Astrocyte of the spinal cord (primary cell): ENCODE measurements at regions of chr17 and their contacts with region 1.

Region 1: DNA sequence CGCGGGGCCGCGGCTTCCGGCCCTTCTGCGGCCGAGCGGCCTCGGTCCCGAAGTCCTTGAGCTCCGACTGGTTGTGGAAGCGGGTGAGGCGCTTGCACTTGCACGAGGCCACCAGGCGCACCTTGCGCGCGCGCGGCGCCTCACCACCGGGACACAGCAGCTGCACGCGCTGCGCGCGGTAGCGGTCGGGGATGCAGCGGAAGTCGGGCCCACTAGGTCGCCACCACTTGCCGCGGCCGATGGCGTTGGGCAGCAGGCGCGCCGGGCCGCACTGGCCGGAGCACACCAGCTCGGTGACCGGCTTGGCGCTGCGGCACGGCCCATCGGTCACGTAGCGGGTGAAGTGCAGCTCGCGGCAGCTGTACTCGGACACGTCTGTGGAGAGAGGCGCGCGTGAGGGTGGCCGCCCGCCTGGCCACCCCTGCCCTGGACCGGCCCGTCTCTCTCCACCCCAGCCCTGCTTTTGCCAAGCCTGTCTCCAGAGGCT is 3.2 kb downstream of the SOST start:
- DNase-seq: no peak
- H3K4me3 ChIP-seq: no peak overlapping the region
- CTCF ChIP-seq: no peak

Region 2: GRCh38 chr17:43694077-43694870 is 61.2 kb before region 1 on chr17:
- in situ Hi-C with region 1: loop called (anchors 10 kb)
- DNase-seq: peak; percentile 76
- H3K4me3 ChIP-seq: no peak overlapping the region
- CTCF ChIP-seq: peak; percentile 85

Region 3: DNA sequence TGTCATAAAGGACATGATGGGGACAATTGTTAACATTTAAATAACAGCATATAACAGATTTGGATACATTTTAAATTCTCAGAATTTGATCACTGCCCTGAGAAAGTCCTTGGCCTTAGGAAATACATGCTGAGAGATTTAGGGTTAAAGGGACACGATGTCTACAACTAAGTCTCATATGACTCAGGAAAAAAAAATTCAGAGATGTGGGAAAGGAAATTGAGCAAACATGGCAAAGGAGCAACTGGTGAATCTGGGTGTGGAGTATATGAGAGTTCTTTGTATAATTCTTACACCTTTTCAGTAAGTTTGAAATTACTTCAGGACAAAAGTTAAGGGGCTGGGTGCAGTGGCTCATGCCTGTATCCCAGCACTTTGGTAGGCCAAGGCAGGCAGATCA is 59.3 kb after region 1 on chr17:
- in situ Hi-C with region 1: no loop called
- DNase-seq: peak; percentile 71
- H3K4me3 ChIP-seq: no peak overlapping the region
- CTCF ChIP-seq: no peak

Region 4: DNA sequence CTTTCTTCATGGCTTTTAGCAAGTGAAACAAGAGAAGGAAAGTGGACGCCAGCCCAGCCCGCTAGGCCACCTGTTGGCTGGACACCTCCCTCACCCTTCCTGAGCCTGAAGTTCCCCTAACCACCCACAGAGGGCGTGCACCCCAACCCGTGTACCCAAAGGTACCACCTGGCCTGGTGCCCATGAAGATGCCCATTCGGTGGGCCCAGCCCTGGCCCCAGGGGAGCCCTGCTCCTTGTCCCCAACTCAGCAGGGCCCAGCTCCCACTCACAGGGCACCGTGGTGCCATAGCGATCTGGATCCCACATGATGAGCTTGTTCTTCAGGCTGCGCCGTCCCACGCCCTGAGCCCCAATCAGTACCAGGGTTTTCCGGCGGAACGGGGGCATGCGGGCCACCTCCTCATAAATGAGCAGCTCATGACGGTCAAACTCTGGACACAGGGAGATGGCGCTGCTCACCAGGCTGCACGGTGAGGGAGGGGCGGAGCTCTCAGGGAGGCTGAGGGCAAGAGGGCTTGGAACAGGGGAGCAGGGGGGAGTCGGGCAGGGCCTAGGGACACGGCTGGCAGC is 125.1 kb after region 1 on chr17:
- in situ Hi-C with region 1: no loop called
- DNase-seq: peak; percentile 9
- H3K4me3 ChIP-seq: no peak overlapping the region
- CTCF ChIP-seq: peak; percentile 74